Activated naive CD4-positive, alpha-beta T cell treated with anti-CD3 and anti-CD28 coated beads, Interleukin-2, amount 10 ng/mL, durations not matched to agents 7 days and 5 days (primary cell): ENCODE measurements at regions of chr1 and their contacts with region 1.

Region 1: GRCh38 chr1:145858894-145859490 is at the start of gene PIAS3:
- DNase-seq: peak; percentile 91
- H3K4me3 Mint-ChIP-seq: peak within 1 kb of the TSS; percentile 89
- H3K27ac Mint-ChIP-seq: peak within 1 kb of the TSS; percentile 82
- H3K4me1 Mint-ChIP-seq: peaks cover 21% of the 10 kb centered on the region
- H3K27me3 Mint-ChIP-seq: peaks cover 22% of the 10 kb centered on the region

Region 2: GRCh38 chr1:145806408-145806807 is 52.6 kb before region 1 on chr1:
- CTCF ChIA-PET with region 1: no interaction called
- DNase-seq: no peak
- H3K4me3 Mint-ChIP-seq: no peak overlapping the region
- H3K27ac Mint-ChIP-seq: no peak overlapping the region
- H3K4me1 Mint-ChIP-seq: peaks cover 11% of the 10 kb centered on the region
- H3K27me3 Mint-ChIP-seq: no peaks in the 10 kb centered on the region

Region 3: GRCh38 chr1:145871994-145872924 is 13.3 kb after region 1 on chr1:
- CTCF ChIA-PET with region 1: interaction called, 12 read pairs
- DNase-seq: peak; percentile 59
- H3K4me3 Mint-ChIP-seq: peak overlapping the region; percentile 62
- H3K27ac Mint-ChIP-seq: no peak overlapping the region
- H3K4me1 Mint-ChIP-seq: peaks cover 16% of the 10 kb centered on the region
- H3K27me3 Mint-ChIP-seq: peaks cover 81% of the 10 kb centered on the region

Region 4: DNA sequence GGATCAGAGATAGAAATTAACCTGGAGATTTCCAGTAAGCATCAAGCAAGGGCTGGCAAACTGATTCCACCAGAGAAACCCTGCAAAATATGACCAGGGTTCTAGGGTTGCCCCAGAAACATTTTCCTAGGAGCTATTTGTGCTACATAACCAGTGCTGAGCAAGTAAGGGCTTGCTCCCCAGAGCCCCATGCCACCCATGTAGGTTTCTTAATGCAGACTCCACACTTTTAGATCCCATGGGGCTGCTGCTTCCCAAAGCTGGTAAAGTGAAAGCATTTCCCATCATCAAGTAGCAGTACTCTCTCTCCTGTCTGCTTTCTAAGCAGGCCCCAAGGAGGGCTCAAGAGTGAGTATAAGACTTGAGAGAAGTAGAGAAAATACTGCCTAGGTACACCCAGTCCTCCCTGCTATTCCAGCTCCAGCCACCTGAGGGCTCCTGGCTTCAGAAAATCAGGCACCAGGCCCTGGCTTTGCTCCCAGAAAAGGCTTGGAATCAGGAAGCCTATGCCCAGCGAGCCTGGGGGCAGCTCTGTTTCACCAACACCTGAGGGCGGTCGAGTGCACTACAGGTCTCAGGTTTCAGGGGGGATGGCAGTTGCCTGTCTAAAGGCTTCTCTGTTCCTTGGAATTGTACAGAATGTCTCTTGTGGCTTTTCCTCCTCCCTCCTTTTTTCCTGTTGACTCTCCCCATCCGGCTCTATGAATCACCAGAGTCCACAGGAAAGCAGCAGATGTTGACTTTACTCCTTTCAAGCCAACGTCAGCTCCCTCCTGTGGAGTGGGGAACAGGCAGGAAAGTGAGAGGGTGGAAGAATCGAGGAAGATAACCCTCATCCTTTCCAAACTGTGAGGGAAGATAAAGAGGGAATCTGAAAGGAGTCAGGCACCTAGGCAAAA is 32.8 kb after region 1 on chr1:
- CTCF ChIA-PET with region 1: interaction called, 10 read pairs
- DNase-seq: peak; percentile 73
- H3K4me3 Mint-ChIP-seq: no peak overlapping the region
- H3K27ac Mint-ChIP-seq: no peak overlapping the region
- H3K4me1 Mint-ChIP-seq: peaks cover 1% of the 10 kb centered on the region
- H3K27me3 Mint-ChIP-seq: peaks cover 14% of the 10 kb centered on the region

Region 5: GRCh38 chr1:145906954-145907753 is 48.2 kb after region 1 on chr1:
- CTCF ChIA-PET with region 1: interaction called, 10 read pairs
- DNase-seq: no peak
- H3K4me3 Mint-ChIP-seq: no peak overlapping the region
- H3K27ac Mint-ChIP-seq: no peak overlapping the region
- H3K4me1 Mint-ChIP-seq: peaks cover 6% of the 10 kb centered on the region
- H3K27me3 Mint-ChIP-seq: no peaks in the 10 kb centered on the region